ENCODE measurements at regions of chr11 and their contacts with region 1.

Region 1: GRCh38 chr11:45771566-45772448 is 33.1 kb upstream of the SLC35C1 start:
- DNase-seq: peak; percentile 74
- H3K4me3 Mint-ChIP-seq: peak overlapping the region; percentile 84
- H3K27ac Mint-ChIP-seq: no peak overlapping the region
- H3K4me1 Mint-ChIP-seq: peaks cover 12% of the 10 kb centered on the region
- H3K27me3 Mint-ChIP-seq: peaks cover 5% of the 10 kb centered on the region

Region 2: DNA sequence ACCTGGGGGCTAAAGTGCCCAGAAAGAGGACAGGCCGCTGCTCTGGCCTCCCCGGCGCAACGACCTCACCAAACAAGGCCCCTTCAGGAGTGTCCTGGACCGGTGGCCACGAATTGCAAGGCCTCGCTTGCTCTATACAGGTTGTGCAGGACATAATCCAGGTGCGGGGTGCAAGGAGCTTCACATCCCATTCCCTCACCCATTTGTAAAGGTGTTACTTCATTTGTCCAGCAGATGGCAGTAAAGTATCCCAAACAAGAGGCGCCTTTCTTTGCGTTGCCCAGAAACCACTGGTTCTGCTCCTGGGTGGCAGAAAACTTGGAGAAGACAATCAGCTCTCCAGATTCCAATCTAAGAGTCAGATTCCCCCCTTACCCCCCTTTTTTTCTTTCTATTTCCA is 661.2 kb before region 1 on chr11:
- intact Hi-C with region 1: loop called (anchors 2 kb)
- DNase-seq: no peak
- H3K4me3 Mint-ChIP-seq: no peak overlapping the region
- H3K27ac Mint-ChIP-seq: no peak overlapping the region
- H3K4me1 Mint-ChIP-seq: no peaks in the 10 kb centered on the region
- H3K27me3 Mint-ChIP-seq: peaks cover 27% of the 10 kb centered on the region

Region 3: DNA sequence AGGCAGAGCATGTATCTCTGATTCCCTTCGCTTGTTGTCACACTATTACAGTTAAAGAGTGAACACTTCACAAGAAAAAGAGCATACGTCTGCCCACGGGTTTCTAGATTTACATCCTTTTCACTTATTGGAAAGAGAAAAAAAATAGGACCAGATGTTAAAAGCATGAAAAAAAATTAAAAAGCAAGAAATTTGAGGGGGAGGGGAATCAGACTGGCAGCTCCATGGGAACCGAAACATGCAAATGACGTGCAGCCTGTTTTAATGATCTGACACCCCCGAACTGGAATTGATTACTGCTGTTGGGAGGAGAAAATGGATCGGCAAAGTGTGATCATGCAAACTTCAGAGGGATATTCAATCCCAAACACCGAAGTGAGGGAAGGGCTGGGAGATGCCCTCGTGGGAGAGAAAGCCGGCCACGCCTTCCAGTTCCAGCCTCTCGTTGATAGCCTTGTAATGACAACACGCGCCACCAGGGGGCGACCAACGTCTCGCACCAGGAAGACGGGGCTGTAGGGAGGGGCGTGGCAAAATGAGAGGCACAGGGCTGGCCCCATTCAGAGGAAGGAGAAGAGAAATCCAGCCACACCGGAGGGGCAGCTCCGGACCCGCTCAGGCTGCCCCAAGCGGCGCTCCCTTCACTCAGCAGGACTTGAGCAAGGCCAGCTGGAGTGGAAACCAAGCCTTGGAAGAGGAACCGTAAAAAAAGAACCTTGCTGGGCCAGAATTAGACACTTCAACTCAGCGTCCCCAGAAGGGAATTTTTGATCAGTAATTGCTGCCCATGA is 431.9 kb before region 1 on chr11:
- intact Hi-C with region 1: loop called (anchors 1 kb)
- DNase-seq: peak; percentile 82
- H3K4me3 Mint-ChIP-seq: peak overlapping the region; percentile 30
- H3K27ac Mint-ChIP-seq: no peak overlapping the region
- H3K4me1 Mint-ChIP-seq: peaks cover 19% of the 10 kb centered on the region
- H3K27me3 Mint-ChIP-seq: peaks cover 23% of the 10 kb centered on the region

Region 4: DNA sequence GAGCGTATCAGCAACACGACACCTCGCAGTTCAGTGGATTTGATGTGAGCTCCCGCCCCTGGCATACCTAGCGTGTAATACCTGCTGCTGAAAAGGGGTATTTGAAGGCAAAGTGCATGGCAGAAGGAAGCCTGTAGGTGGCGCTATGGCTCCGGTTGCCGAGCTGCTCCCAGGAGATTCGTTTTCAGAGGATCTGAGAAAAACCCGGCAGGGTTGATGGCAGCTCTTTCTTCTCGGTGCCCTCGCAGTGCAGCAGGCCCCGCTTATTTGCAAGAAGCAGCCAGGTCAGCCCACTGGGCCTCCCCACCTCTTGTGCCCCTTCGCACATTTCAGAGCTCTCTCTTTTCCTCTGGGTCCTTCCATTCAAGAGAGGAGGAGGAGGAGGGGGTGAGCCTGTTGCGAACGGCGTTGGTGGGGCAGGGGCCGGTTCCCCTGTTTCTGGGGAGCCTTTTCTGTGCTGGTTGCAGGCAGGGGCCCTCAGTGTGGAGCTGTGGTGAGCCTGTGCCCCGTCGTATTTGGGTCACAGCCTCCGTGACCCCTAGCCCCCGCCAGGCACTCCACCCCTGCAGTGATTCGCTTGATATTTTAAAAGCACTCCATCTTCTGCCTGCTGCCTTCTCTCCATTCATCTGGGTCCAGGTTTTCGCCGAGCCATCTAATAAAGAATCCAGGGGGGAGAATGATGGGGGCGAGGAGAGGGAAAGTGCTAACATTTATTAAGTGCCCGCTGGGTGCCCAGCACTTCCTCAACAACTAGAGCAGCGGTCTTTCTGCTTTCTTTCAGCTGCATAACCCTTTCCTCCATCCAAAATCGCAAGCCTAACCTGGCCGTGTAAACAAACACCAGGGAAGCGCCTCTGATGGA is 400.3 kb before region 1 on chr11:
- intact Hi-C with region 1: loop called (anchors 1 kb)
- DNase-seq: peak; percentile 36
- H3K4me3 Mint-ChIP-seq: no peak overlapping the region
- H3K27ac Mint-ChIP-seq: no peak overlapping the region
- H3K4me1 Mint-ChIP-seq: peaks cover 5% of the 10 kb centered on the region
- H3K27me3 Mint-ChIP-seq: peaks cover 9% of the 10 kb centered on the region

Region 5: DNA sequence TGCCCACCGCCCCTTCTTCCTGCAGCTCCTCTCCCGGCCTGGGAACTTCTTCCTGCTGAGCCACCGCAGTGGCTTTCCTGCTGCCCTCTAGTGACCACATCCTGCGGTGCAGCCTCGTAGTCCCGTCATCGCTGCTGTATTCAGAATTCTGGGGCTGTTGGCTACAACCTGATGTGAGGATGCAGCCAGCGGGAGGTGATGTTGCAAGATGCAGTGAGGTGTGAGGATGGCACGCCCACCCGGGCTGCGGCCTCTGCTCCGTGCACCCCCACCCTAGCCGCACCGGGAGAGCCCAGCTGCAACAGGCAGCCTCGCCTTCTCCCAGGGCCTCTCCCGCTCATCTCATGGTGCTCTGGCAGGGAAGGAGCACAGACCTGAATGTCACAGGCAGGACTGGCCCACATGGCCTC is 116.5 kb before region 1 on chr11:
- intact Hi-C with region 1: loop called (anchors 2 kb)
- DNase-seq: peak; percentile 32
- H3K4me3 Mint-ChIP-seq: no peak overlapping the region
- H3K27ac Mint-ChIP-seq: no peak overlapping the region
- H3K4me1 Mint-ChIP-seq: peaks cover 8% of the 10 kb centered on the region
- H3K27me3 Mint-ChIP-seq: peaks cover 14% of the 10 kb centered on the region

Region 6: DNA sequence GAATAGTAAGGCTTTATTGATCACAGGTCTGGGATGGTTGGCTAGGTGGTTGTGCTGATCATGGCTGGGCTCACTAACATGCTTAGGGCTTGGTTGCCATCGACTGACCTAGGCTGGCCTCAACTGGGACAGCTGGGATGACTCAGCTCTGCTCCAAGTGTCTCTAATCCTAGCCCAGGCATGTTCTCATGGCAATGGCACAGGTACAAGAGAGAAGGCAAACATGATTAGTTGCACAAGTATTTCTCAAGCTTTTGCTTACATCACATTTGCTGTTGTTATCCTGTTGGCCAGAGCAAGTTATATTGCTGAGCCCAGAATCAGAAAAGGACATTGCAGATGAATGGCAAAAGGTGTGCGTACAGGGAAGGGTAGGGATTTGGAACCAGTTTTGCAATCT is 35.4 kb before region 1 on chr11:
- intact Hi-C with region 1: no loop called
- DNase-seq: no peak
- H3K4me3 Mint-ChIP-seq: no peak overlapping the region
- H3K27ac Mint-ChIP-seq: no peak overlapping the region
- H3K4me1 Mint-ChIP-seq: no peaks in the 10 kb centered on the region
- H3K27me3 Mint-ChIP-seq: no peaks in the 10 kb centered on the region

Region 7: DNA sequence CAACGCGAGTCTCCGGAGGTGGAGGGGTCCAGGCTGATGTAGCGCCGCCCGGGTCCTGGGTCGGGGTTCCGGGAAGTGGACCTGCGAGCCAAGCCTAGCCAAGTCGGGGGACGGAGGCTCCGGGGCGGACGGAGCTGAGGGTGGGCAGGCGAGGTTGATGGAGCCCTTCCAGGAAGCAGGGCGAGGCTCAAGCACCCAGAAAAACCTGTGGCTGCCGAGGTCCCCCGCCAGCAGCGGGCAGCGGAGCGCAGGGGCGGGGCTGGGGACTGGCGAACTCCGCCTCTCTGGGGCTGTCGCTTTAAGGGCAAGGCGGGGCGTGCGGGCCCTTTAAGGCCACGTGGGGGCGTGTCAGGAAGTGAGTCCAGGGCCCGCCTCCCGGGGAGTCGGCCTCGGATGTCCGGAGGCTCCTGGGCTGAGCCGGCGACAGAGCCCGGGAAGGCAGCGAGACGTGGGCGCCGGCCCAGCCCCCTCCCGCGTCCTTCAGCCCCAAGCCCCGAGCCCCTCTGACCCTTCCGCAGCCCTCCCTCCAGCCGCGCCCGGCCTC is 33.0 kb after region 1 on chr11 and contains the start of gene SLC35C1:
- intact Hi-C with region 1: loop called (anchors 1 kb)
- DNase-seq: peak; percentile 96
- H3K4me3 Mint-ChIP-seq: peak within 1 kb of the TSS; percentile 97
- H3K27ac Mint-ChIP-seq: peak within 1 kb of the TSS; percentile 92
- H3K4me1 Mint-ChIP-seq: peaks cover 38% of the 10 kb centered on the region
- H3K27me3 Mint-ChIP-seq: no peaks in the 10 kb centered on the region
- total RNA-seq, gene SLC35C1: 16.3 and 18.2 TPM in 2 replicates

Region 8: GRCh38 chr11:45993531-45994001 is 221.8 kb after region 1 on chr11:
- intact Hi-C with region 1: no loop called
- DNase-seq: no peak
- H3K4me3 Mint-ChIP-seq: no peak overlapping the region
- H3K27ac Mint-ChIP-seq: no peak overlapping the region
- H3K4me1 Mint-ChIP-seq: peaks cover 6% of the 10 kb centered on the region
- H3K27me3 Mint-ChIP-seq: no peaks in the 10 kb centered on the region

Region 9: GRCh38 chr11:46006418-46007070 is 234.7 kb after region 1 on chr11:
- intact Hi-C with region 1: loop called (anchors 1 kb)
- DNase-seq: no peak
- H3K4me3 Mint-ChIP-seq: no peak overlapping the region
- H3K27ac Mint-ChIP-seq: no peak overlapping the region
- H3K4me1 Mint-ChIP-seq: no peaks in the 10 kb centered on the region
- H3K27me3 Mint-ChIP-seq: no peaks in the 10 kb centered on the region